ENCODE measurements at regions of chr3 and their contacts with region 1.

Region 1: DNA sequence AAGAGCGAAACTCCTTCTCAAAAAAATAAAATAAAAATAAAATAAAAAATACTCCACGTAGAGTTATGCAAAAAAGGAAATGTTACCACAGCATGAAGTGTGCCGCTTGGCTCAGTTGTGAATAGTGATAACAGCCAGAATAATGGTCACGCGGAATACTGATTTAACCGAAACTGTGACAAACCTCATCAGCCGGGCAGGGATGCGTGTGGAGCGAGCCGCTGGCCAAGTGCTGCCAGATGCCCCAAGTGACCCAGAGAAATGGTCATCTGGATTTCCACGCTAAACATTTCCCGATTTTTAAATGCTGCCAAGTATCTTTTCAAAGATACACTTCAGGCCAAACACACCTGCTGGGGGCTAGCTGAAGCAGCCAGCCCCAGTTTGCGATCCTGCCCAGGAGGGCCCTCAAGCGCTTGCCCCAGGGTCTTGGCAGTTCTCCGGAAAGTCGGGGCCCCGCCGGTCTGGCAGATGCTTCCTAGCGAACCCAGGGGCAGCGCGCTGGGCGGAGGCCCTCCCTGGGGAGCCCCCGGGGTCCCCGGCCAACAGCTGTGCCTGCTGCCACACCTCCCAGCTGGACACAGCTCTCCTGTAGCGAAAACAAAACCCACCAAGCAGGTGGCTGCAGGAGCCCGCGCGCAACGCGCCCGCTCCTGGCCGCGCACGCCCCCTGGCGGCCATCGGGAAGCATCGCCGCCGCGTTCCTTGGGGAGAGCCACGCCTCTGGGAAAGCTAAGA is 35.1 kb downstream of the CMTM6 start:
- DNase-seq: peak; percentile 78
- ATAC-seq: peak; percentile 94
- H3K4me3 Mint-ChIP-seq: peak overlapping the region; percentile 9
- H3K27ac Mint-ChIP-seq: no peak overlapping the region
- H3K4me1 Mint-ChIP-seq: peaks cover 38% of the 10 kb centered on the region
- H3K27me3 Mint-ChIP-seq: no peaks in the 10 kb centered on the region

Region 2: DNA sequence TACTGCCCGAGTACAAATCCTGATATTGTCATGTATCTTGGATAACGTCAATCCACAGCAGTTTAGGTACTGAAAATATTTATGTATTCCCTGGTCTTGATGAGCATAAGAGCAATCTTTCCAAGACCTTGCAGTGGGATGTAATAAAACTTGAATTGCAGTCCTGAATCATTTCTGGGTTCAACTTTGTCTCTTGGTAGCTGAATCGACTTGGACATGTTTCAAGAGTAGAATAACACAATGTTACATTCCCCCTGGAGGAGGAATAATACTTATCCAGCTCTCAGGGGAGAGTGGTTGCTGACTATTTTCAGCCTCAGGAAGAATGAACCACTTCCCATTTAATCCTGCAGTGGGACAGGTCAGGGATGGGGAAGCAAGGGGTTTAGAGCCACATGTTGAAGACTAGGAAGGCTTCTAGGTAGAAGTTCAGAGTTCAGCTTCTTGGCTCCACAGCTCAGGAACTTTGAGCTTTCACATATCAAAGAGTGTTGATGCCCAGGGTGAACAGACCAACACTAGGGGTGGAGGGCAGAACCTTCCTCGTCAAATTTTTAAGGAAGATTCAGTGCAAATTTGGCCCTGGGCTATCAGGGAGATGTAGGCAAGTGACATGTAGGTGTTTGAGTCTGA is 404.4 kb before region 1 on chr3:
- CTCF ChIA-PET with region 1: no interaction called
- DNase-seq: no peak
- ATAC-seq: no peak
- H3K4me3 Mint-ChIP-seq: no peak overlapping the region
- H3K27ac Mint-ChIP-seq: no peak overlapping the region
- H3K4me1 Mint-ChIP-seq: no peaks in the 10 kb centered on the region
- H3K27me3 Mint-ChIP-seq: no peaks in the 10 kb centered on the region

Region 3: DNA sequence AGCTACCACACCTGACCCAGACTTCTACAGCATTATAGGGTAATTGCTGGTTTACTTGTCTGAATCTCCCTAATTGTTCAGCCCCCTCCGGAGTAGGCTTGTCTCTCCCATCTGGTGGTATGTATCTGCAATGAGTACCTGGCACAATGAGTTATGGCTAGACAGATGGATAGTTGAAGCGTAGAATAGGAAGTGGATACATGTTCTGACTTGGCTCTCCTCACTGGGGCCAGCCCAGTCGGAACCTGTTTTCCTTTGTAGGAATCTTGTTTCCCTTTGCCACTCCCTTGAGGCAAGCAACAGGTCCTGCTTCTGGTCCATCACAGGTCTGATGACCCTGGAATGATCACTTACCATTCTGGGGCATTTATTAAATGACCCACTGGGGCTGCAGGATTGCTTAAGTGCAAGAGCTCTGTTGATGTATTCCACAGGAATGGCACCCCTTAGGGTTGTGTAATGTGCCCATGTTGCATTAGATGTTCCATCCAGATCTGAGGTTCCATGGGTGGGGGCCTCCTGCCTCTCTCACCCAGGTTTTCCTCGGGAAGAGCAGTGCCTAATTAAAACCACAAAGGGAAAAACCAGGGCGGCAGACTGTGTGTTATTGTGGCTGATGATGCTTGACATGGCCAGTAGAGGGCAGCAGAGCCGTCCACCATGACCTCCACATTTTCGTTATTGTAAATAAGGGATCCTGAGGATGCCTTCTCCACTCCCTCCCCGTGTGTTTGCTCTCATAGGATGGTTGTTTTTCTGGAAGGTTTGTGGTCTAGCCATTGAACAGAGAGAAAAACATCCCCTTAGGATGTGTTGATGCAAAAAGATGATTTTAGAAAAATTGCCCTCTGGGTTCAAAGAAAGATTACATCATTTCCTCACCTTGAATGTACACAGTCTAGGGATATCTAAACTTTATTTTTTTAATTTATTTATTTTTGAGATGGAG is 171.0 kb before region 1 on chr3:
- CTCF ChIA-PET with region 1: interaction called, 12 read pairs
- DNase-seq: peak; percentile 75
- ATAC-seq: peak; percentile 81
- H3K4me3 Mint-ChIP-seq: no peak overlapping the region
- H3K27ac Mint-ChIP-seq: peak overlapping the region; percentile 75
- H3K4me1 Mint-ChIP-seq: peaks cover 16% of the 10 kb centered on the region
- H3K27me3 Mint-ChIP-seq: no peaks in the 10 kb centered on the region

Region 4: DNA sequence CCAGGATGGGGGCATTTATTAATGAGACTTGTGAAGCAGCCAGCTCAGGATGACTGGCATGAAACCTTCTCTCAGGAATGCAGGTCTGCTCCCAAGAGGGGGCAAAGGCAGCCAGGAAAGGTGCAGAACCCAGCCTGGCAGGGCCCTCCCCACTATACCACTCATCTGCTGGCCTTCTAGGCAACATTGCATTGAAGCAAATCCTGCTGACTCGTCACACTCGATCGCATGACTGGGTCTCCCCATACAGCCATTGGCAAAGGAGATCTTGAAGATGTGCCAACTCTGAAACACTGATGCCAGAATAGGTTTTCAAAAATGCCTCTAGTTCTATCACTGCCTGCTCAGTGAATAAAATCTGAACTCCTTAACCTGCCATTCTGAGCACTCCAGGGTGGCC is 141.5 kb before region 1 on chr3:
- CTCF ChIA-PET with region 1: no interaction called
- DNase-seq: no peak
- ATAC-seq: no peak
- H3K4me3 Mint-ChIP-seq: no peak overlapping the region
- H3K27ac Mint-ChIP-seq: no peak overlapping the region
- H3K4me1 Mint-ChIP-seq: no peaks in the 10 kb centered on the region
- H3K27me3 Mint-ChIP-seq: no peaks in the 10 kb centered on the region

Region 5: DNA sequence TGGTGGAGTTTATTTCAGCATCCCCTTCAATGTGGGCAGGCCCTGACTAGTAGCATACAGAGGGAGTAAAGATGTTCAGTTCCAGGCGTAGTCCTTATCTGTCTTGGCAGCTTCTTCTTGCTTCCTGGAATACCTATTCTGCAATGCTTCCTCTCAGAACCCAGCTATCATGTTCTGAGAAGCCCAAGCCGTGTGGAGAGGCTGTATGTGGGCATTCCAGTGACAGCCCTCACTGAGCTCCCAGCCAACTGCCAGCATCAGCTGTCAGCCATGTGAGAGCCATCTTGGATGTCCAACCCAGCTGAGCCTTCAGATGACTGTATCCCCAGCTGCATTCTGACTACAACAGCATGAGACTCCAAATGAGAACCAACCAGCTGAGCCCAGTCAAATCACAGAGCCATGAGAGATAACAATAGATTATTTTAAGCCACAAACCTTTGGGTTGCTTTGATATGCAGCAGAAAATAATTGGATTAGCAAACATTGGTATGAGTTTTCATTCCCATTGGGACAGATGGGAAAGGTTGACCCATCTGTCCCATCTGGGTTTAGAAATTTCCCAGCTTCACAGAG is 84.3 kb before region 1 on chr3:
- CTCF ChIA-PET with region 1: interaction called, 12 read pairs
- DNase-seq: no peak
- ATAC-seq: no peak
- H3K4me3 Mint-ChIP-seq: no peak overlapping the region
- H3K27ac Mint-ChIP-seq: no peak overlapping the region
- H3K4me1 Mint-ChIP-seq: no peaks in the 10 kb centered on the region
- H3K27me3 Mint-ChIP-seq: peaks cover 4% of the 10 kb centered on the region

Region 6: GRCh38 chr3:32414520-32415202 is 52.8 kb before region 1 on chr3:
- CTCF ChIA-PET with region 1: interaction called, 40 read pairs
- DNase-seq: peak; percentile 79
- ATAC-seq: peak; percentile 95
- H3K4me3 Mint-ChIP-seq: peak overlapping the region; percentile 41
- H3K27ac Mint-ChIP-seq: peak overlapping the region; percentile 86
- H3K4me1 Mint-ChIP-seq: peaks cover 66% of the 10 kb centered on the region
- H3K27me3 Mint-ChIP-seq: no peaks in the 10 kb centered on the region

Region 7: DNA sequence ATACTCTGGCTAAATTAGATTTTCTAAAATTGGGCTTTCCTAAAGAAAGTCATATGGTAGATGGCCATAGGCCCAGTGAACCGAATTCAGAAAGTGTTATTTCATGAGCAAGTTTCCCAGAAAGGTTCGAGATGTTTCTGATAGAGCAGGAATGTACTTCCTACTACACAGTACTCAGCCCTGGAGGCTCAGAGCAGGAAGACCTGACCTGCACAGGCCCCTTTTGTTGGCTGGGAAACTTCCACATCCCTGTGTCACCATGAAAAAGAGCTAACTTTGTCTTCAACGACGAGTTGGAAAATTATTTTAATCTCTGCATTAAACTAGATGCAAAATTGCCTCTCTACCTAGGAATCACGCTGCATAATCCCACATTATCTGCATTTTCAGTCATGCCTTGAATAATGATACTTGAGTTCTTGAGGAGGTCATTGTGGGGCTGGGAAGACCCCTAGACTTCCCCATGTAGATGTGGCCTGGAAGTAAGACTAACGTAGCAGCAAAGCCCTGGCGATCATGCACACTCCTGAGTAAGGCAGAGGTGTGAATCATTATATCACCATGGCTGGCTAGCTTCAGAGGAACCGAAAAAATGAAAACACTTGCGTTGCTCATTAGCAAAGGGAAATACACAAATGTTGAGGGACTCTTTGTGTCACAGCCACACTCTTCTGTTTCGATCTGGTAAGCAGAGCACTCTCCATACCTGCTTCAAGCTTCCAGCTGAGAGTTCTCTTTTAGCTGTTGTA is 28.7 kb before region 1 on chr3:
- CTCF ChIA-PET with region 1: interaction called, 60 read pairs
- DNase-seq: peak; percentile 56
- ATAC-seq: peak; percentile 74
- H3K4me3 Mint-ChIP-seq: peak overlapping the region; percentile 45
- H3K27ac Mint-ChIP-seq: peak overlapping the region; percentile 94
- H3K4me1 Mint-ChIP-seq: peaks cover 72% of the 10 kb centered on the region
- H3K27me3 Mint-ChIP-seq: no peaks in the 10 kb centered on the region

Measured in activated CD8-positive, alpha-beta memory T cell treated with anti-CD3 and anti-CD28 coated beads, Interleukin-2, amount 10 ng/mL, durations not matched to agents 7 days and 5 days (primary cell).